Activated CD8-positive, alpha-beta T cell treated with anti-CD3 and anti-CD28 coated beads, Interleukin-2, amount 10 ng/mL, durations not matched to agents 7 days and 5 days (primary cell): ENCODE measurements at regions of chr17 and their contacts with region 1.

Region 1: GRCh38 chr17:76714822-76715495 is 4.2 kb upstream of the MXRA7 start:
- DNase-seq: peak; percentile 87
- ATAC-seq: no peak
- H3K4me3 Mint-ChIP-seq: peak overlapping the region; percentile 7
- H3K27ac Mint-ChIP-seq: peak overlapping the region; percentile 91
- H3K4me1 Mint-ChIP-seq: peaks cover 62% of the 10 kb centered on the region
- H3K27me3 Mint-ChIP-seq: no peaks in the 10 kb centered on the region

Region 2: GRCh38 chr17:76523084-76524037 is 191.6 kb before region 1 on chr17:
- CTCF ChIA-PET with region 1: interaction called, 23 read pairs
- POLR2A ChIA-PET with region 1: no interaction called
- DNase-seq: peak; percentile 86
- ATAC-seq: peak; percentile 88
- H3K4me3 Mint-ChIP-seq: peak overlapping the region; percentile 51
- H3K27ac Mint-ChIP-seq: peak overlapping the region; percentile 65
- H3K4me1 Mint-ChIP-seq: peaks cover 28% of the 10 kb centered on the region
- H3K27me3 Mint-ChIP-seq: no peaks in the 10 kb centered on the region

Region 3: DNA sequence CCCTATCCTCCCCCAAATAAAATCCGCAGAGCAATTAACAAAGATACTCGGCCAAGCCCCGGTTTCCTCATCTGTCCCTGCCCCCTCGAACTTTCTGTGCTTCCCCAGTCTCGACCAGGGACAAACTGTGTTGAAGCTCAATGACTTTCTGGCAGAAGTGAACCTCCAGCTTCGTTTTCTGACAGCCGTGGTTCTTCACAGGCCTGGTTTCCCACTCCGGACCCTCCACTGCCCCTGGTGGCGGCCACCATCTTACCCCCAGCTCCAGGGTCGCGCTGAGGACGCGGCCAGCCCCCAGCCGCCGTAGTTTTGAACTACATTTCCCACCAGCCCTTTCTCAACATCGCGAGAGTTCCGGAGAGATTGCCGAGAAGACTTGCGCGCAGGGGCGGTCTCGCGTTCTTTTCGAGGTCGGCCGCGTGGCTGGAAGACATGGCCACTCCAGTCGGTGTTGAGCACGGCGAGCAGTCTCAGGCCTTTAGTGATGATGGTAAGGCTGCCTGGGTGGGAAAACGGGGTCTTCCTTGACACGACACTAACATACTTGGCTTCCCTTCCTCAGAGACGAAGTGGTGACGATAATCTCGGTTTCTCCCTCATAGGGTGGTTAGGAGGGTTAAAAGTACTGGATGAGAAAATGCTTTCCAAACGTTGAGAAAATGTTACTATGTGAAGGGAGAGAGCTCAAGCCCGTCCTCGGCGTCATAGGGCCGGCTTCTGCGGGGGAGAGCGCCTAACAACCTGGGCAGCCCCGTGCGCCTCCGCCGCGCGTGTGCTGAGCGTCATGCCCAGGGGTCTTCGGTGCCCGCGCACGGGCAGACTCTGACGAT is 157.4 kb before region 1 on chr17:
- CTCF ChIA-PET with region 1: interaction called, 19 read pairs
- POLR2A ChIA-PET with region 1: interaction called, 7 read pairs
- DNase-seq: peak; percentile 97
- ATAC-seq: peak; percentile 94
- H3K4me3 Mint-ChIP-seq: peak overlapping the region; percentile 100
- H3K27ac Mint-ChIP-seq: peak overlapping the region; percentile 99
- H3K4me1 Mint-ChIP-seq: peaks cover 55% of the 10 kb centered on the region
- H3K27me3 Mint-ChIP-seq: no peaks in the 10 kb centered on the region

Region 4: DNA sequence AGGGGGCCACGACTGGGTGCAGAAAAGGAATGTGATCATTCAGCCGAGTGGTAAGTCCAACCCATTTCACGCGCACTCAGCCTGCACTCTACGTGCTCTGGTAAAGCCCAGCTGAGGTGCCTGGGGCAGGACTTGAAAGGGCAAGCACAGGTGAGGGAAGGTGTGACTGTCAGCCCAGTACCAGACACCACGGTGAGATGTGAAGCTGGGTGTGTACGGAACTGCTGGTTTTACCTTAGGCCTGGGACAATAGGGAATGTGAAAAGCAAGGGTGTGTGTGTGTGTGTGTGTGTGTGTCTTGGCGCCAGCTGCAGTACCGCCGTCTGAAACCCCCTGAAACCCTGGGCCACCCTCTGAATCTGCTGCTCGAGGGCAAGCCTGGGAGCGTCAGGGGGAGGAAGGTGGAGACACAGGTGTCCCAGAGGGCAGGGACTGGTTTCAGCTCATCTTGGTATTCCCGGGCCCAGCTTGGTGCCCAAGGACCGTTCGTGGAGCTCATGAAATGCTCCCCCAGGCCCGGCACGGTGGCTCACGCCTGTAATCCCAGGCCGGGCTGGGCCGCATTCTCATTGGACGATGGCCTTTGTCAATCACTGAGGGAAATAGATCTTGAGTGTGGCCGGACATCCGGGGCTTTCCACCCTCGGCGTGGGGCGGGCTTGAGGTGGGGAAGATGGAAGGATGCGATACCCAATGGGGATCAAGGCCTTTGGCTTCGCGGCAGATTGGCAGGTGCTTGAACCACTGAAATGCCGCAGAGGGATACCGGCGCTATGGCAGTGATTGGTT is 43.6 kb before region 1 on chr17:
- CTCF ChIA-PET with region 1: interaction called, 10 read pairs
- POLR2A ChIA-PET with region 1: interaction called, 6 read pairs
- DNase-seq: peak; percentile 100
- ATAC-seq: peak; percentile 99
- H3K4me3 Mint-ChIP-seq: peak overlapping the region; percentile 89
- H3K27ac Mint-ChIP-seq: peak overlapping the region; percentile 95
- H3K4me1 Mint-ChIP-seq: peaks cover 41% of the 10 kb centered on the region
- H3K27me3 Mint-ChIP-seq: peaks cover 5% of the 10 kb centered on the region

Region 5: DNA sequence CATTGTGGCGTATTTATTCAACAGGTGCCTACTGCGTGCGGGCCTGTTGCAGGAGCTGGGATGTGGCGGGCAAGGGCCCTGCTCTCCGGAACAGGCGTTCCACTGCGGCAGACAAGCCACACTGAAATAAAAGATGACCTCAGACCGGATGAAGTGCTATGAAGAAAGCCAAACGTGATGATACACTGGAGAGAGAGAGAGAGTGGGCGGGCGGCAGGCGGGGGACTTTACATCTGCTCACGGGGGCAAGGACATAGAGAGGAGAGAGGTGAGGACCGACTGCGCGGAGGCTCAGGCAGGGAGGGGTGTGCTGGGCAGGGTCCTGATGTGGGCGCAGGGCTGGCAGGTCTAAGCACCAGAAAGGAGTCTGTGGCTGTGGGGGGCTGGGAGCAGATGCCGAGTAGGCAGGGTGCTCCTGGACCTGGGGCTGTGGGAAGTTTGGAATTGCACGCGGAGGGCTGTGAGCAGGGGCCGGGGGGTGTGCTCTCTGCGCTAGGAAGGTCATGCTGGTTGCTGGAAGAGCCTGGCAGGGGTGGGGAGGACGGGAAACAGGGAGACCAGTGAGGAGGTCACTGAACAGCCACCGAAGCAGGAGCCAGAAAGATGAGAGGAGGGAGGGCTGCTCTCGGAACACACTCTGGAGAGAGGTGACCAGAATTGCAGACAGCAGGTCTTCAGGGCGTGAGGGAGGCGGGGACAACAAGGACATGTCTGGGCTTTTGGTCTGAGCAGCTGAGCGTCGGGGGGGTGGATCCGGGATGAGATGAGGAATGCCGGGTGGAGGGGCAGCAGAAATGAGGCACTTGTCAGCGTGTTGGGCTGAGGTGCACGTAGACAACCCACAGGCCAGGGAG is 14.1 kb before region 1 on chr17:
- CTCF ChIA-PET with region 1: interaction called, 19 read pairs
- POLR2A ChIA-PET with region 1: interaction called, 3 read pairs
- DNase-seq: no peak
- ATAC-seq: peak; percentile 25
- H3K4me3 Mint-ChIP-seq: no peak overlapping the region
- H3K27ac Mint-ChIP-seq: peak overlapping the region; percentile 72
- H3K4me1 Mint-ChIP-seq: peaks cover 21% of the 10 kb centered on the region
- H3K27me3 Mint-ChIP-seq: no peaks in the 10 kb centered on the region

Region 6: DNA sequence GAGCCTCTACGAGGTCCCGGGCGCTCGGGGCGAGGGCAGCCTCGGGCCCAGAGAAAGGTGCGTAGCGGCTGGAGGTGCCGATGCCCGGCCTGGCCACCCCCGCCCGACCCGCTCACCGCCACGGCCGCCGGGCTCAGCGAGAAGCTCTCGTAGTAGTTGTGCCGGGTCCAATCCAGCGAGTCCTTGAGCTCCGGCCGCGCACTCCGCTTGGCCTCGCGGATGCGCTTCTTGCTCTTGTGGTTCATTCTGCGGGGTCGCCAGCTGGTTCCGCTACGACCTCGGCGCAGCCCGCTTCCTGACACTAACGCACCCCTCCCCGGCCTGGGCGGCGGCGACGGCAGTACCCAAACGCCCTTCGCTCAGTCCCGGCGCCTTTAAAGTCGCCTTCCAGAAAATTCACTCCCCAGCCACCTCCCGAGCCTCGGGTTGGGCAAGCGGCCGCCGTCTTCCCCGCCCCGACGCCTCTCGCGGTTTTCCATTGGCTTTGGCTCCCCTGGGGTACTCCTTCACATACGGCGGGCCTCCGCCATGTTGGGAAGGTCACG is 11.3 kb after region 1 on chr17 and contains the start of gene JMJD6:
- CTCF ChIA-PET with region 1: interaction called, 126 read pairs
- POLR2A ChIA-PET with region 1: interaction called, 66 read pairs
- DNase-seq: peak; percentile 97
- ATAC-seq: peak; percentile 86
- H3K4me3 Mint-ChIP-seq: peak within 1 kb of the TSS; percentile 97
- H3K27ac Mint-ChIP-seq: peak within 1 kb of the TSS; percentile 96
- H3K4me1 Mint-ChIP-seq: peaks cover 64% of the 10 kb centered on the region
- H3K27me3 Mint-ChIP-seq: no peaks in the 10 kb centered on the region
- total RNA-seq, gene JMJD6: 59.3 to 61.2 TPM

Region 7: DNA sequence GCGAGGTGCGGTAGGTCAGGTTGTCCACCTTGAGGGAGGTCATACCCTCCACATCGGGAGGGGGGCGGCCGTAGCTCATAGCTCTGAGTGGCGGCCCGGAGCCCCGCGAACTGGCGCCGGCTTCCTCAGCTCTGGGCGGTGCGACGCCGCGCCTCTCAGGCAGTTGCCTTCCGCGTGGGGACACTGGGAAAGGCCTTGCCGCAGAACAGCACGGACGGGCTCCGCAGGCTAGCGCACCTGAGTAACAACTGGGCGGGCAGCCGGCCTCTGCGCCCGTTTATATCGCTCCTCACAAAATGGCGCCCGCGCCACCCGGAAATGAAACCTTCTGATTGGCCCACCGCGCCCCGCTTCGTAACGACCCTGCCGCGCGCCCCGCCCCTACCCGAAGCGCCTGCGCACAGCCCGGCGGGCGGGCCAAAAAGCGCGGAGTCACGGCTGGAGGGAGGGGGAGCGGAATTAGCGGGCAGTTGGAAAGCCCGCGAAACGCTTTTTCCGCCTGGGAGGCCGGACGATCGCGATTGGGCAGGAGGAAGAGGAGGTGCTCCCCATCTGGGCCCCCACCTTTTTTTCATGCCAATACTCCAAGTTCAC is 22.2 kb after region 1 on chr17 and contains the start of gene SRSF2:
- CTCF ChIA-PET with region 1: interaction called, 76 read pairs
- POLR2A ChIA-PET with region 1: interaction called, 18 read pairs
- DNase-seq: peak; percentile 99
- ATAC-seq: peak; percentile 72
- H3K4me3 Mint-ChIP-seq: peak within 1 kb of the TSS; percentile 99
- H3K27ac Mint-ChIP-seq: peak within 1 kb of the TSS; percentile 95
- H3K4me1 Mint-ChIP-seq: peaks cover 44% of the 10 kb centered on the region
- H3K27me3 Mint-ChIP-seq: no peaks in the 10 kb centered on the region
- total RNA-seq, gene SRSF2: 420 to 444 TPM